ENCODE measurements at regions of chr19 and their contacts with region 1.

Region 1: DNA sequence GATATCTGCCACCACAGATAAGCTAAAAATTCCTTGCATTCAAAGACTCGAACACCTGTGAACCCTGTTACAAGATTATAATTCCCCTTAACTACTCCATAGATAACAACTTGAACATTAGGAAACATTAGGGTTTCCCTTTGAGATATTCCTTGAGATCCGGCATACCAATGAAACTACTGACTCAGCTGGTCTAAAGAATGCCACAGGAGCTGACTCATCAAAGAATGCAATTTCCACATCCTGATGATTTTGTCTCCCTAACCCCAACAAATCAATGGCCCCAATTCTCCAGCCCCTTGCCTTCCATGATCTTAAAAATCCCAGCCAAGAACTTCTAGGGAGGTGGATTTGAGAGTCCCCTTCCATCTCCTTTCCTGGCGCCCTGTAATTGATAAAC is 35.6 kb upstream of the ZNF599 start:
- DNase-seq: no peak
- H3K4me3 ChIP-seq: no peak overlapping the region
- CTCF ChIP-seq: no peak
- POLR2A ChIP-seq: no peak

Region 2: DNA sequence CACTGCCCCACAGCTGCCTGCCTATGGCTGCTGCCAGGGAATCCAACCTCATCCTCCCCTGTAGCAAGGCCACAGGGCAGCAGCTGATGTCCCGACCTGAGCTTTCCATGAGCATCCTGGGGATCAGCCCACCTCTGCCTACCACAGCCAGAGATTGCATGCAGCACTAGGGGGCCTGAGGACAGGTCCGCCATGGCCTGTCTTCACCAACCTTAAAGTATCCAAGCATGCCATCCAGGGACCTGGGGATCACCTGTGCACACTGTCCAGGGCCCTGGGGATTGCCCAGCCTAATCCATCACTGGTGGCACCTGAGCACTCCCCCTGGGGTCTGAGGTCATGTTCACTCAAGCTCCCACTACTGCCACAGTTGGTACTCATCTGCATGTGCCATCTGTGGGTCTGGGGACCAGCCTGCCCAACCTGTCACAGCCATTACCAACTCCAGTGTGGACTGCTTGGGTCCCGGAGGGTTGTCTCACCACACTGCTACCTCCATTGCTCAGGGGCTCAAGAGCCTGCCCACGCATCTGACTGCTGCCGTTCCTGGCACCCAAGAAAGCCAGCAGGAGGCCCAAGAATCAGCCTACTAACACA is 958.9 kb before region 1 on chr19:
- intact Hi-C with region 1: no loop called
- DNase-seq: peak in 1 of 2 donors; percentile 62
- H3K4me3 ChIP-seq: no peak overlapping the region
- CTCF ChIP-seq: no peak
- POLR2A ChIP-seq: no peak

Region 3: GRCh38 chr19:34633802-34634201 is 174.8 kb before region 1 on chr19:
- intact Hi-C with region 1: loop called (anchors 10 kb)
- DNase-seq: no peak
- H3K4me3 ChIP-seq: no peak overlapping the region
- CTCF ChIP-seq: no peak
- POLR2A ChIP-seq: no peak